ENCODE measurements at regions of chr18 and their contacts with region 1.

Region 1: GRCh38 chr18:46097801-46098615 is at the start of gene ATP5F1A:
- DNase-seq: peak; percentile 78
- ATAC-seq: peak; percentile 86
- H3K4me3 Mint-ChIP-seq: peak within 1 kb of the TSS; percentile 97
- H3K27ac Mint-ChIP-seq: peak within 1 kb of the TSS; percentile 97
- H3K4me1 Mint-ChIP-seq: peaks cover 35% of the 10 kb centered on the region
- H3K27me3 Mint-ChIP-seq: no peaks in the 10 kb centered on the region
- CTCF ChIP-seq: no peak
- total RNA-seq, gene ATP5F1A: 336 and 348 TPM in 2 replicates

Region 2: GRCh38 chr18:46080156-46080555 is 17.9 kb before region 1 on chr18:
- CTCF ChIA-PET with region 1: no interaction called
- POLR2A ChIA-PET with region 1: interaction called, 11 read pairs
- intact Hi-C with region 1: no loop called
- DNase-seq: no peak
- ATAC-seq: no peak
- H3K4me3 Mint-ChIP-seq: no peak overlapping the region
- H3K27ac Mint-ChIP-seq: no peak overlapping the region
- H3K4me1 Mint-ChIP-seq: no peaks in the 10 kb centered on the region
- H3K27me3 Mint-ChIP-seq: no peaks in the 10 kb centered on the region
- CTCF ChIP-seq: no peak

Region 3: GRCh38 chr18:46891742-46892214 is 793.8 kb after region 1 on chr18:
- CTCF ChIA-PET with region 1: no interaction called
- POLR2A ChIA-PET with region 1: interaction called, 10 read pairs
- intact Hi-C with region 1: no loop called
- DNase-seq: no peak
- ATAC-seq: peak; percentile 52
- H3K4me3 Mint-ChIP-seq: no peak overlapping the region
- H3K27ac Mint-ChIP-seq: no peak overlapping the region
- H3K4me1 Mint-ChIP-seq: peaks cover 25% of the 10 kb centered on the region
- H3K27me3 Mint-ChIP-seq: no peaks in the 10 kb centered on the region
- CTCF ChIP-seq: no peak

Measured in activated B cell treated with CpG ODN at 0.5 μM for 24 hours (primary cell).